ENCODE measurements at regions of chr12 and their contacts with region 1.

Region 1: DNA sequence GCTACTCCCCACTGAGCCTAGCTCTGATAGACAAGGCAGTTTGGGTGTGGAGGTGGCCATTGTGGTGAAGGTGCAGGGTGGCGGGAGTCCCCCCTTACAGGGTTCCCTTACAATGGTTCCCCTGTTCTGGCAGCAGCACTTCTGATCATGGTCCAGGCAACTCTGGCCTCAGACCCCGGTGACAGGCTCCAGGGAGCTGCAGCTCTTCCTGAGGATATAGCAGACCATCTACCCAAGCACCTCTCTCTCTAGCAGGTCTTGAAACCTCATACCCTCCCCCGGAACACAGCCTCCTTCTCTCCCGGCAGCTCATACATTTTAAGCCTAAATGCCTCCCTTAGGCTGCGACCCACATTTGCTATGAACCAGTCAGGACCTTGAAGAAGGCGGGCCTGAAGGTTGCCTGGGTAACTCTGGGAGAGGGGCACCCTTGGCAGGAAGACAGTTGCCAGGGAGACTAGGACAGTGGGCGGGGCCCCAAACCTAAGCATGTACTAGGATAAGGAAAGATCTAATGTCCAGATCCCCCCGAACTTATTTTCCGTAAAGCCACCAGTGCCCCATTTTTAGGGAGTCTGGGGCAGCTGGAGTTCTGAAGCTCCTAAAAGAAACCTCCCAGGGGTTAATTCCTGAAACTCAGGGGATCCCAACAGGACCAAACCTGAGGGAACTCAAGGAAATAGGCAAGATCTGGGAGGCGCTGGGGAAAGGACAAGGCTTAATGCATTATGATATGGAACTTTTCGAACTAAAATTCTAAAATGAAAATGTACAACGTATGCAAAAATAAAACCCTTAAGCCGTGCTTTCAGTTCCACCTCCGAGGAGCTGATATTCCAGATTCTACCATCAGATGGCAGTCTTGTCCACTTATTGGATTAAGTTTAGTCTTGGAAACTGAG is 4.5 kb upstream of the GDF11 start:
- DNase-seq: peak; percentile 96
- H3K4me3 ChIP-seq: peak overlapping the region; percentile 46 to 63 (median 56)
- H3K27ac ChIP-seq: peak overlapping the region; percentile 64 to 78 (median 76)
- H3K4me1 ChIP-seq: peaks cover 24 to 35% (median 30%) of the 10 kb centered on the region in 4 donors
- H3K27me3 ChIP-seq: no peaks in the 10 kb centered on the region
- CTCF ChIP-seq: peak; percentile 86 to 95 (median 90)
- EP300 ChIP-seq: no peak
- POLR2A ChIP-seq: no peak

Region 2: DNA sequence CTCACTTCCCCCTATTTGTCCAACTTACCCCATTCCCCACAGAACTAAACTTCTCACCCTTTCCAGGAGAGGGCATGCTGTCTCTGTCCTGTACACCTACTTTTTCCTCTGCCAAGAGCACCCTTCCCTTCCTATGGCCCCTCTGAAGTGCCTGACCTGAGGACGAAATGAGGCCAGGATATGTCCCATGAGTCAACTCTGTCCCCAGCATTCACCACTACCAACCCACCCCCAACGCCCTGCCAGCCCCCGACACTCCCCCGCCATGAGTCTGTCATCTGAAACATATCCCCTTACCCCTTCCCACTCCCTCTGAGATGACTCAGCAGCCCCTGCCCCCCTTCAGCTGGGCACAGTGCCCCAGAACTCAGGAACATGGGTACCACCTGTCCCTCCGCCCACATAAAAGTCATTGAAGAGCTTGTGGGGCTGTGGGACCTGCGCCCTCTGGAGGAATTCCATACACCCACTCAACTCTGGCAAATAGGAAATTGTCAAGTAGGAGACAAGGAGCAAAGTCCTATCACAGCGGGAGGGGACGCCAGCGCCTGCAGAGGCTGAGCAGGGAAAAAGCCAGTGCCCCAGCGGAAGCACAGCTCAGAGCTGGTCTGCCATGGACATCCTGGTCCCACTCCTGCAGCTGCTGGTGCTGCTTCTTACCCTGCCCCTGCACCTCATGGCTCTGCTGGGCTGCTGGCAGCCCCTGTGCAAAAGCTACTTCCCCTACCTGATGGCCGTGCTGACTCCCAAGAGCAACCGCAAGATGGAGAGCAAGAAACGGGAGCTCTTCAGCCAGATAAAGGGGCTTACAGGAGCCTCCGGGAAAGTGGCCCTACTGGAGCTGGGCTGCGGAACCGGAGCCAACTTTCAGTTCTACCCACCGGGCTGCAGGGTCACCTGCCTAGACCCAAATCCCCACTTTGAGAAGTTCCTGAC is 57.0 kb before region 1 on chr12:
- intact Hi-C with region 1: loop called (anchors 5 kb)
- DNase-seq: no peak
- H3K4me3 ChIP-seq: peak overlapping the region in 3 of 4 donors; percentile 8 to 19 (median 19)
- H3K27ac ChIP-seq: peak overlapping the region in 3 of 4 donors; percentile 56 to 64 (median 56)
- H3K4me1 ChIP-seq: peaks cover 10 to 16% (median 14%) of the 10 kb centered on the region in 4 donors
- H3K27me3 ChIP-seq: no peaks in the 10 kb centered on the region
- CTCF ChIP-seq: peak in 2 of 3 experiments; percentile 44 to 51
- EP300 ChIP-seq: no peak
- POLR2A ChIP-seq: no peak

Region 3: DNA sequence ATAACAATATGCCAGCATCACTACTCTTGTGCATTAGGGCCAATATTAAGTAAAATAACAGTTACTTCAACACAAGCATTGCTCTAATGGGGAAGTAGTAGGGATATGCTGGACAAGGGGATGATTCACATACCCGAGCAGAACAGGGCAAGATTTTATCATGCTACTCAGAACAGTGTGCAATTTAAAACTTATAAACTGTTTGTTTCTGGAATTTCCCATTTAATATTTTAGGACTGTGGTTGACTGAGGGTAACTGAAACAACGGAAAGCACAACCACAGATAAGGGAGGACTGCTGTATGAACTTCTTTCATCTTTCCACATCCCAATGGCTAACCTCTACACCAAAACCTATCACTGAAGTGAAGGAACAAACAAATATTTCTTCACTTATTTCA is 42.3 kb after region 1 on chr12:
- intact Hi-C with region 1: no loop called
- DNase-seq: no peak
- H3K4me3 ChIP-seq: no peak overlapping the region
- H3K27ac ChIP-seq: no peak overlapping the region
- H3K4me1 ChIP-seq: peaks cover 0 to 2% (median 0%) of the 10 kb centered on the region in 4 donors
- H3K27me3 ChIP-seq: no peaks in the 10 kb centered on the region
- CTCF ChIP-seq: no peak
- EP300 ChIP-seq: no peak
- POLR2A ChIP-seq: no peak

Region 4: DNA sequence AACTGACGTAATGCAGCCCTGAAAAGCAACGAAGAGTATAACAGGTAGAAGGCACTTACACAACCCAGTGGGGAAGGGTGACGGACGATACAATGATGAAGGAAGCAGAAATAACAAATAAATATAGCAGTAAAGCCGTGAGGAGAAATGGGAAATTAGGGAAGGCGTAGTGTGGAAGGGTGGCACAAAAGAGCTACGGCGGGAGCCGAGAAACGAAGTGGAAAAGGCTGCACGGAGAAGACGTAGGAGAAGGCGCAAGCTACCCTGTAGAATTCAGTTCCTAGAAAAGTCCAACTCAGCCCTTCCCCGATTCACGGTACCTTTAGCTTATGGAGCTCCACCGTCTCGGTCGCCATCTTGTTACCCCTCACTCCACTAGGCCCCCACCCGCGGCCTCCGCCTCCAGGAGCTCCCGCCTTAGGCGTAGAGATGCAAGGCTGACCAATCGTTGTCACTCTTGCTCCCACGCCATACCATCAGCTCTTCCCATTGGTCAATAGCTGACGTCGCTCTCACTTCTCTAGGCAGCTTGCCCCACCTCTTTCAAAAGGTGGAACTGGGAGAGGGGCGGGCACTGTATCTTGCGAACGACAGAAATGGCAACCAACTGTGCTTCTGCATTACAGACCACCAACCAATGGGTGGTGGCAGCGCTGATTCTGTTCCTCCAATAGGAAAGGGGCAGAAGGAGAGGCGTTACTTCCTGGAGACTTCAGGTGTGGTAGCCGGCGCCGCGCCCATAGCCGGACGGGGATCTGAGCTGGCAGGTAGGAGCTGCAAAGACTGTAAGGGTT is 79.2 kb after region 1 on chr12 and contains the starts of genes ORMDL2 and SARNP:
- intact Hi-C with region 1: loop called (anchors 5 kb)
- DNase-seq: peak; percentile 99
- H3K4me3 ChIP-seq: peak within 1 kb of the TSS; percentile 70 to 81 (median 78)
- H3K27ac ChIP-seq: peak within 1 kb of the TSS; percentile 88 to 91 (median 89)
- H3K4me1 ChIP-seq: peaks cover 34 to 57% (median 51%) of the 10 kb centered on the region in 4 donors
- H3K27me3 ChIP-seq: no peaks in the 10 kb centered on the region
- CTCF ChIP-seq: no peak
- EP300 ChIP-seq: no peak
- POLR2A ChIP-seq: peak; percentile 49
- total RNA-seq, gene ORMDL2: 8.3 to 15.7 (median 11.8) TPM
- total RNA-seq, gene SARNP: 57.7 to 78.0 (median 70.1) TPM

Region 5: DNA sequence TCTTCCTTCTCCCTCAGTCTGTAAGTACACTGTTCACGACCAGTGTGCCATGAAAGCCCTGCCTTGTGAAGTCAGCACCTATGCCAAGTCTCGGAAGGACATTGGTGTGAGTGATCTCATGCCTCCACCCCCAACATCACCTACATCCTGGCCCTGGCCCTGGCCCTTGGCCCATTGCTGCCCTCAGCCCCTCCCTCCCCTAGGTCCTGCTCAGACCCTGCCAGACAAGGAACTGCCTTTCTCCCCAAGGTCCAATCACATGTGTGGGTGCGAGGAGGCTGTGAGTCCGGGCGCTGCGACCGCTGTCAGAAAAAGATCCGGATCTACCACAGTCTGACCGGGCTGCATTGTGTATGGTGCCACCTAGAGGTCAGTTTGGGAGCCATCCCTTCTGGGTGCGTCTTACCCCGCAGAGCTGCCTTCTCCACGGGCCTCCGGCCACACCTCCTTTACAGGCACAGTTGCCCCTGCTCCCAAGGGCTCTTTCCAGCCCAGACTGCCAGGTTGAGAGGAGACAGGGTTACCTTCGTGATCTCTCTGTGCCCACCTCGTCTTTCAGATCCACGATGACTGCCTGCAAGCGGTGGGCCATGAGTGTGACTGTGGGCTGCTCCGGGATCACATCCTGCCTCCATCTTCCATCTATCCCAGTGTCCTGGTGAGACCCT is 201.8 kb after region 1 on chr12:
- intact Hi-C with region 1: loop called (anchors 2 kb)
- DNase-seq: peak; percentile 97
- H3K4me3 ChIP-seq: peak overlapping the region; percentile 8 to 33 (median 24)
- H3K27ac ChIP-seq: peak overlapping the region; percentile 35 to 59 (median 46)
- H3K4me1 ChIP-seq: peaks cover 8 to 22% (median 17%) of the 10 kb centered on the region in 4 donors
- H3K27me3 ChIP-seq: no peaks in the 10 kb centered on the region
- CTCF ChIP-seq: peak; percentile 89 to 97 (median 89)
- EP300 ChIP-seq: no peak
- POLR2A ChIP-seq: no peak

Region 6: DNA sequence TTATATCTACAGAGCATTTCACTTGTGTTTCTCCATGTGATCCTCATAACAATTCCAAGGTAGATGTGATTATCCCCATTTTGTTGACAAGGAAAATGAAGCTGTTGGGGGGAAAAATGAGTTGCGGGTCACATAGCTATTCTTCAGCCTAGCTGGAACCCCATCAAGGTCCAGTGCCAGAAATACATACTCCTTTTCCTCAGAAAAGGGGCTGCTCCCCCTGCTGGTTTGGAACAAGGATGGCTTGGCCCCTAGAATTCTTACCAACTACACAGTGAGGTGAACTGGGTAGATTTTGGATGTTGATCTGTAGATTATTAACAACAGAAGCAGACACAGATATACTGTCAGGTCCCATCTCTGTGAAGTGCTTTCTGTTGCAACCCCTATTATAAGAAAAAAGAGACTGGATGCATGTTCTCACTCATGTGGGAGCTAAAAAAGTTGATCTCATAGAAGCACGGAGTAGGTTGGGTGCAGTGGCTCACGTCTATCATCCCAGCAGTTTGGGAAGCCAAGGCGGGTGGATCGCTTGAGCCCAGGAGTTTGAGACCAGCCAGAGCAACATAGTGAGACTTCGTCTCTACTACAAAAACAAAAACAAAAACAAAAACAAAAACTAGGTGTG is 291.4 kb after region 1 on chr12:
- intact Hi-C with region 1: loop called (anchors 10 kb)
- DNase-seq: no peak
- H3K4me3 ChIP-seq: no peak overlapping the region
- H3K27ac ChIP-seq: no peak overlapping the region
- H3K4me1 ChIP-seq: peaks cover 0 to 7% (median 0%) of the 10 kb centered on the region in 4 donors
- H3K27me3 ChIP-seq: no peaks in the 10 kb centered on the region
- CTCF ChIP-seq: peak; percentile 56 to 71 (median 63)
- EP300 ChIP-seq: no peak
- POLR2A ChIP-seq: no peak

Measured in esophagus muscularis mucosa (tissue), 4 donors.